Right ventricle myocardium inferior (tissue), 1 donor: ENCODE measurements at regions of chr9 and their contacts with region 1.

Region 1: DNA sequence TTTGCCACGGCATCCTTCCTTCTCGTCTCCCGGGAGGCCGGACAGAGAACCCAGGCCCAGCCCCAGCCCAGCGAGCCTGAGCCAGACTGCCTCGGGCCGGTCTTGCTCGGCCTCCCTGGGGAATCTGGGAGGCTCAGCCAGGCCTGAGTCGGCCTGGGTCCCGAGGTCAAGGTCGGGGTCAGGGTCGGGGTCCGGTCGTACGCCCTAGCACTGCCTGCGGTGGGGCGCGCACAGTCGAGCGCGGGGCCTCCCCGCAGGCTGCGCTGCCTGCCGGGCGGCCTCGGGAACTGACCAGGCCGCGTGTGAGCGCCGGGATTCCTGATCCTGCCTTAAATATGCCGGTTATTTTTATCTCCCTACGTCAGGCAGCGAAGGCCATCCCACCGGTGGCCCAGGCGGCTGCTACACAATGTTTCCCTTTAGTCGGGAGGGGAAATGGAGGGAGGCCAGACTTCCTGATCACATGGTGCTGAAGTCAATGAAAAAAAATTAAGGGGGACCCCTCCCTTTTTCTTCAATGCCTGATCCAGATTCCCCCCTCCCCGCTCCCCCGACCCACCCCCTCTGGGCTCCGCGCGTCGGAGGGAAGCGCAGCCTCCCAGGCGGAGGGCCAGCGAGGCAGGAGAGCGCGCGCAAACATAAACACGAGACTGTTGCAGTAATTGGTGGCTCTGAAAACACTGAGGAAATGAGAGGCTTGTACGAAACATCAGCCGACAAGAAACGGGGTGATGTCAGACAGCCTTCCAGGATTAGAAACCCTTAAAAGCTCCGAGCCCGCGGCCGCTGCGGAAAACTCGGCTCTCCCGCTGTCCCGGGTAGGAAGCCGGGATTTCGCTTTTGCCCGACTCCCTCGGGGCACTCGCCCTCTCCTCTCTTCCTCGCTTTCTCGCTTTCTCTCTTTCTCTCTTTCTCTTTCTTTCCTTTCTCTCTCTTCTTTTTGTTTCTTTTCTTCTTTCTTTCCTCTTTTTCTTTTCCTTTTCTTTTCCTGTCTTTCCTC is 148.2 kb upstream of the KLF4 start:
- DNase-seq: peak; percentile 94
- ATAC-seq: peak; percentile 94

Region 2: GRCh38 chr9:107576962-107577776 is 60.6 kb before region 1 on chr9:
- intact Hi-C with region 1: loop called (anchors 10 kb)
- DNase-seq: no peak
- ATAC-seq: peak; percentile 44

Region 3: DNA sequence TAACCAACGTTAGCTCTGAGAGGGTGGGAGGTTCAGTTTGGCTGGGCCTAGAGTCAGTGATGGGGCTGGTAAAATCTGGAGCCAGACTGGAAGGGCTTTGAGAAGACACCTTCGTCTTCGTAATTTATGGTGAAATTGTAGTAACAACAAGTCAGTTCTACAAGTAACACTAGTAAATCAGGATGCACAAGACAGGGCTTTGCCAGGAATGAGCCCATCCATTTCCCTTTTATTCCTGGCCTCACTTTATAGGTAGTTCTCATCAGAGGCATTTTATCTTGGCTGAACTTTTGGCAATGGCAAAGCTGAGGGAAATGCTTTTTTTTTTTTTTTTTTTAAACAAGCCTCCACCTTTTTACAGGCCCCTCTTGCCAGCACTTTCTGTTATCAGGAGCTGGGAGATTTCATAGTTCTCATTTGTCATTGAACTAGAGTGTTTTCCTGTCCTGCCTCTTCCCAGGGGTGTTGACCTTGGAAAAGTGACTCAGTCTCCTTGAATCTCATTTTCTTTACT is 37.6 kb before region 1 on chr9:
- intact Hi-C with region 1: no loop called
- DNase-seq: no peak
- ATAC-seq: peak; percentile 81

Region 4: GRCh38 chr9:108142504-108143201 is 504.9 kb after region 1 on chr9:
- intact Hi-C with region 1: loop called (anchors 5 kb)
- DNase-seq: peak; percentile 89
- ATAC-seq: peak; percentile 99